ENCODE measurements at regions of chr9 and their contacts with region 1.

Region 1: DNA sequence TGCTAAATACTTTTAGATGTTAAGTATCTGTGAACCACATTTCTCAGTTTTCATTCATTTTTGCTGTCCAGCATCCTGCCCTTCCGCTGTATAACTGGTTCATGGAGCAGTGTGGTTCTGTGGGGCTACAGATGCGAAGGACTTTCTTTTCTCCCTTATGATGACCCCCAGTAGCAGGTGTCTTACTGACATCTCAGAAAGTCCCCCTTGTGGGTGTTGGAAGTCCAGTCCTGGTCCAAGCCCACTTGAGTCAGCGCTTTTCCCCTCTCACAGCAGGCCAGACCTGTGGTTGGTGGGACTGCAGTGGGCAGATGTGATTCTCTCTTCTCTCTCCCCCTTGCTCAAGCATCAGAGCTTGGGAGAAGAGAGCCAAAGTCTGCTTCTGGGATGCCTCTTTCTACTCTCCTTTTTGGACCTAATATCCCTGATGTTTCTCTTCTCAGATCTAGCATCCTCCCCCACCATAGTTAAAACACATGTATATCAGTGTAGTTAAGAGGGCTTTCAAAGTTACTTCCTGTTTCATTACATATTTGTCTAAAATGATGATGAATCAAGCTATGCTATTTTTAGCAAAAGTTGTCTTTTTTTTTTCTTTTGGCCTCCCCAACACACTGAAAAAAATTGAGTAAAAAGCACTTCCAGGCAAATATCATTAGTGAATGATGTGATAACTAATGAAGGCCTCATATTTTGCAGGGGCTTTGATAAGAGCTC is 119.5 kb upstream of the ZNF618 start:
- DNase-seq: no peak
- ATAC-seq: no peak
- H3K4me3 ChIP-seq: no peak overlapping the region
- H3K27ac ChIP-seq: no peak overlapping the region
- H3K4me1 ChIP-seq: no peaks in the 10 kb centered on the region
- H3K27me3 ChIP-seq: no peaks in the 10 kb centered on the region; a peak in 1 of 4 replicates
- CTCF ChIP-seq: no peak
- EP300 ChIP-seq: no peak
- POLR2A ChIP-seq: no peak
- RAD21 ChIP-seq: no peak

Region 2: GRCh38 chr9:113436728-113437471 is 319.7 kb before region 1 on chr9:
- CTCF ChIA-PET with region 1: no interaction called
- POLR2A ChIA-PET with region 1: no interaction called
- RAD21 ChIA-PET with region 1: no interaction called
- SMC1A ChIA-PET with region 1: no interaction called
- in situ Hi-C with region 1: no loop called
- intact Hi-C with region 1: no loop called
- DNase-seq: no peak
- ATAC-seq: no peak
- H3K4me3 ChIP-seq: no peak overlapping the region
- H3K27ac ChIP-seq: no peak overlapping the region
- H3K4me1 ChIP-seq: no peaks in the 10 kb centered on the region
- H3K27me3 ChIP-seq: no peaks in the 10 kb centered on the region
- CTCF ChIP-seq: no peak
- EP300 ChIP-seq: no peak
- POLR2A ChIP-seq: no peak
- RAD21 ChIP-seq: no peak

Region 3: DNA sequence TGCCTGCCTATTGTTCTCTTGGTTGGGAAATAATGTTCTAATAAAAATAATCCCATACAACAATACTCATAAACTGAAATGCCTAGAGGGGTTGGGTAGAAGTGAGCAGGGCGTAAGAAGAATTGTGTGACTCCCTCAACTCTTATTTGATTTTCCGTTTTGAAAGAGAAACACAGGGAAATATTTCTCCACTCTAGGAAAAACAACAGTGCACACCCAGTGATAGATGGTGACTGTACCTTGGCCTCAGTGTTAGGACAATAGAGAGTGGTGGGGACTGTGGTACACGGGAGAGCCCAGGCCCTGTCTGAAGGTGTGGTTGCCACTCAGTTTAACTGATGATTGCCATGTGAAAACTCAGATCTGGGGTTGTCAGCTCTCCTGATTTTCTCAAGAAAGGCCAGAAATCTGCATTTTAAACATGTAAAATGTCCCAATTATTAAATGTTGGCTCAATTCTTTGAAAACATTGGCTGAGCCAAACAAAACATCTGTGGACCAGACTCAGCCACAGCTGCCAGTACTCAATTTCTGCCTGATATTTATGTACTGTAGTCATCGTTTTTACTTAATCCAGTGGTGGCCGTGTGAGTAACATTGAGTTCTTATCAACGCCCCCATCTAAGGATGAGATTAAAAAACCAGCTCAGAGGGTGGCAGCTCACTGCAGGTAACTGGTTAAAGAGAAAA is 15.6 kb after region 1 on chr9:
- CTCF ChIA-PET with region 1: no interaction called
- POLR2A ChIA-PET with region 1: no interaction called
- RAD21 ChIA-PET with region 1: no interaction called
- SMC1A ChIA-PET with region 1: no interaction called
- in situ Hi-C with region 1: no loop called
- intact Hi-C with region 1: loop called (anchors 1 kb)
- DNase-seq: no peak
- ATAC-seq: no peak
- H3K4me3 ChIP-seq: no peak overlapping the region
- H3K27ac ChIP-seq: no peak overlapping the region
- H3K4me1 ChIP-seq: no peaks in the 10 kb centered on the region
- H3K27me3 ChIP-seq: no peaks in the 10 kb centered on the region
- CTCF ChIP-seq: no peak
- EP300 ChIP-seq: no peak
- POLR2A ChIP-seq: no peak
- RAD21 ChIP-seq: no peak

Measured in GM12878 (cell line).